ENCODE measurements at regions of chr6 and their contacts with region 1.

Region 1: GRCh38 chr6:88492824-88493223 is 326.7 kb upstream of the CNR1 start:
- DNase-seq: no peak
- ATAC-seq: no peak
- H3K4me3 ChIP-seq: no peak overlapping the region
- H3K27ac ChIP-seq: peak overlapping the region; percentile 91
- H3K4me1 ChIP-seq: peaks cover 16% of the 10 kb centered on the region
- H3K27me3 ChIP-seq: no peaks in the 10 kb centered on the region
- CTCF ChIP-seq: peak; percentile 10 to 27 (median 15); a peak in 2 of 6 replicates
- EP300 ChIP-seq: no peak
- POLR2A ChIP-seq: no peak
- RAD21 ChIP-seq: peak; percentile 52

Region 2: GRCh38 chr6:88443554-88443953 is 49.3 kb before region 1 on chr6:
- CTCF ChIA-PET with region 1: interaction called, 3 read pairs
- POLR2A ChIA-PET with region 1: interaction called, 3 read pairs
- RAD21 ChIA-PET with region 1: interaction called, 25 read pairs
- SMC1A ChIA-PET with region 1: interaction called, 18 read pairs
- in situ Hi-C with region 1: no loop called
- intact Hi-C with region 1: loop called (anchors 5 kb)
- DNase-seq: peak; percentile 21
- ATAC-seq: peak; percentile 92
- H3K4me3 ChIP-seq: no peak overlapping the region
- H3K27ac ChIP-seq: no peak overlapping the region
- H3K4me1 ChIP-seq: peaks cover 7% of the 10 kb centered on the region; the same call in 1 of the 2 replicates
- H3K27me3 ChIP-seq: no peaks in the 10 kb centered on the region
- CTCF ChIP-seq: no peak
- EP300 ChIP-seq: no peak
- POLR2A ChIP-seq: no peak
- RAD21 ChIP-seq: no peak

Region 3: GRCh38 chr6:88629838-88630494 is 137.1 kb after region 1 on chr6:
- CTCF ChIA-PET with region 1: interaction called, 3 read pairs
- POLR2A ChIA-PET with region 1: interaction called, 3 read pairs
- RAD21 ChIA-PET with region 1: interaction called, 10 read pairs
- SMC1A ChIA-PET with region 1: interaction called, 13 read pairs
- in situ Hi-C with region 1: no loop called
- intact Hi-C with region 1: no loop called
- DNase-seq: no peak
- ATAC-seq: peak; percentile 84
- H3K4me3 ChIP-seq: no peak overlapping the region
- H3K27ac ChIP-seq: no peak overlapping the region; the same call in 1 of the 2 replicates
- H3K4me1 ChIP-seq: peaks cover 7% of the 10 kb centered on the region; the same call in 1 of the 2 replicates
- H3K27me3 ChIP-seq: no peaks in the 10 kb centered on the region
- CTCF ChIP-seq: peak; percentile 14 to 28 (median 23); a peak in 3 of 6 replicates
- EP300 ChIP-seq: no peak
- POLR2A ChIP-seq: no peak
- RAD21 ChIP-seq: peak; percentile 39; the same call in 1 of the 2 replicates

Region 4: DNA sequence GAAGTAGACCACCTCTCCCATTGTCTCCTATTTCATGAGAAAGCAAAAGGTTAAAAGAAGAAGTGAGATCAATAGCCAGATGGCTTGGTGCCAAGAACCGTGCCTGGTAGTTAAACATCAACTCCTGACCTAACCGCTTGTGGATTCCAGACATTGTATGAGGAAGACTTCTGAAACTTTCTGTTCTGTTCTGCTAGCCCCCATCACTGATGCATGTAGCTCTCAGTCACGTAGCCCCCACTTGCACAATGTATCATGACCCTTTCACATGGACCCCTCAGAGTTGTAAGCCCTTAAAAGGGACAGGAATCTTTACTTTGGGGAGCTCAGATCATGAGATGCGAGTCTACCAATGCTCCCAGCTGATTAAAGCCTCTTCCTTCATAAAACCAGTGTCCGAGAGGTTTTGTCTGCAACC is 169.3 kb after region 1 on chr6:
- CTCF ChIA-PET with region 1: no interaction called
- POLR2A ChIA-PET with region 1: no interaction called
- RAD21 ChIA-PET with region 1: interaction called, 13 read pairs
- SMC1A ChIA-PET with region 1: no interaction called
- in situ Hi-C with region 1: no loop called
- intact Hi-C with region 1: loop called (anchors 1 kb)
- DNase-seq: peak; percentile 89
- ATAC-seq: peak; percentile 88
- H3K4me3 ChIP-seq: no peak overlapping the region
- H3K27ac ChIP-seq: peak overlapping the region; percentile 39
- H3K4me1 ChIP-seq: peaks cover 17% of the 10 kb centered on the region
- H3K27me3 ChIP-seq: no peaks in the 10 kb centered on the region
- CTCF ChIP-seq: no peak
- EP300 ChIP-seq: peak in 1 of 2 experiments; percentile 69; a peak in 2 of 4 replicates
- POLR2A ChIP-seq: no peak
- RAD21 ChIP-seq: no peak

Region 5: DNA sequence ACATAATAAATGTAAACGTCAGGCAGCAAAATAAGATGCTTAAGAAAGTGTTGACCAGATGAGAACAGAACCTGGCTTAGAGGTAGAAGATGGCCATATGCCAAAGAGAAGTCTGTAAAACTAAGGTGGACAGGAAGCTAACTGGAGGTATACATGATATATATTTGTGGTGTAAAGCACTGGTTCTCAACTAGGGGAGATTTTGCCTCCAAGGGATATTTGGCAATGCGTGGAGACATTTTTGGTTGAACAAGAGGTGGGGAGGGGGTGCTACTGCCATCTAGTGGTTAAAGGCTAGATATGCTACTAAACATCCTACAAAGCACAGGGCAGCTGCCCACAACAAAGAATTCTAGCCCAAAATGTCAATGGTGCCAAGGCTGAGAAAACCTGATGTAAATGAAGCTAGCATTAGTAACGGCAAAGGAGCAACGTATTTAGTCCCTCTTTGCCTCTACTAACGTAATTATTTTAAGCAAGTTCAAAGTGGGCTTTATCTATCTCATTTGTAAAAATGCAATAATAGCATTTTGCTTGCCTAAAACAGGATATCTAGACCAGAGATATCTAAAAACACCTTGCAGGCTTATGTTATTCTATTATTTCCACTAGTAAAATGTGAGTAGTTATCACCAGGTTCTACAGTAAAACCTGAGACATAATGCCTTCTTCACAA is 288.0 kb after region 1 on chr6:
- CTCF ChIA-PET with region 1: interaction called, 14 read pairs
- POLR2A ChIA-PET with region 1: no interaction called
- RAD21 ChIA-PET with region 1: interaction called, 18 read pairs
- SMC1A ChIA-PET with region 1: interaction called, 29 read pairs
- in situ Hi-C with region 1: no loop called
- intact Hi-C with region 1: loop called (anchors 1 kb)
- DNase-seq: peak; percentile 63
- ATAC-seq: peak; percentile 90
- H3K4me3 ChIP-seq: no peak overlapping the region
- H3K27ac ChIP-seq: no peak overlapping the region
- H3K4me1 ChIP-seq: no peaks in the 10 kb centered on the region
- H3K27me3 ChIP-seq: no peaks in the 10 kb centered on the region
- CTCF ChIP-seq: peak; percentile 60 to 68 (median 67); a peak in 5 of 6 replicates
- EP300 ChIP-seq: no peak
- POLR2A ChIP-seq: no peak
- RAD21 ChIP-seq: peak; percentile 88

Measured in GM12878 (cell line).